Panc1 (cell line): ENCODE measurements at regions of chrX and their contacts with region 1.

Region 1: DNA sequence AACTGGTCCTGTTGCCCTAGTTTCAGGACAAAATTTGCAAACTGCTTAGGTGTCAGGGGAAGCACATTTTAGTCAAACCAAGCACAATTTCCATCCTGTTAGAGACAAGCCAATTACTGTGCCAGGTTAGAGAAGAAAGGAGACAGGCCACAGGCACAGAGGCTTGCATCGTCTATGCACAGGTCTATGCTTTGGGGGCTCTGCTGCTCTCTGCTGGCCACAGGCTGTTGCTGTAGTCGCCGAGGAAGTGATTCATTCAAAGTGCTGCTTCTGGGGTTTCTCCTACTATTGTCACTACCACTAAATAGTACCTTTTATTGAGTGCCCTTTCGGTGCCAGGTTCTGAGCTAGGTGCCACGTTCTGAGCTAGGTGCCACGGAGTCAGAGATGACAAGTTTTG is 45.5 kb downstream of the VGLL1 start:
- DNase-seq: peak; percentile 38
- ATAC-seq: peak; percentile 98
- H3K4me3 ChIP-seq: no peak overlapping the region
- H3K27ac ChIP-seq: no peak overlapping the region
- H3K4me1 ChIP-seq: 0 out of 2 replicates have a peak, but pooled peaks cover 2% of the 10 kb centered on the region
- H3K27me3 ChIP-seq: no peaks in the 10 kb centered on the region
- CTCF ChIP-seq: peak; percentile 86

Region 2: DNA sequence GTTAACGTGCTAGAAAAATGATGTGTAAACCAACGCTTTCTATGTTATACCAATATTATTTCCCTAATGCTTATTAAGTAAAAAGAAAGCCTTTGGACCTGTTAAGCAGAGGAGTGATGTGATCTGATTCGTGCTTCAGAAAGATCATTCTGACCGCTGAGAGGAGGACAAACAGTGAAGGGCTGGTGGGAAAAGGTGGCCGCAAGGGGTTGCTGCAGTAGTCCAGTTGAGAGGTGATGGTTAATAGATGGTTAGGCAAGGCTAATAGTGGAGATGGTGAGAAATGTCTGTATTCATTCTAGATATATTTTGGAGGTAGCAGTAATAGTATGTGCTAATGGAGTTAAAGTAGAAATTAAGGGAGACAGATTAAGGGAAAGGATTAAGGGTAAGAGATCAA is 58.5 kb before region 1 on chrX:
- CTCF ChIA-PET with region 1: no interaction called
- POLR2A ChIA-PET with region 1: no interaction called
- in situ Hi-C with region 1: no loop called
- intact Hi-C with region 1: loop called (anchors 5 kb)
- DNase-seq: no peak
- ATAC-seq: peak; percentile 77
- H3K4me3 ChIP-seq: no peak overlapping the region
- H3K27ac ChIP-seq: no peak overlapping the region
- H3K4me1 ChIP-seq: no peaks in the 10 kb centered on the region
- H3K27me3 ChIP-seq: no peaks in the 10 kb centered on the region
- CTCF ChIP-seq: peak; percentile 42